ENCODE measurements at regions of chr18 and their contacts with region 1.

Region 1: GRCh38 chr18:59056706-59057492 is 82.8 kb upstream of the SEC11C start:
- DNase-seq: peak; percentile 88 to 91
- ATAC-seq: peak; percentile 73
- H3K4me3 ChIP-seq: no peak overlapping the region
- H3K27ac ChIP-seq: no peak overlapping the region
- H3K4me1 ChIP-seq: peaks cover 1 to 8% of the 10 kb centered on the region in 2 donors
- H3K27me3 ChIP-seq: no peaks in the 10 kb centered on the region

Region 2: DNA sequence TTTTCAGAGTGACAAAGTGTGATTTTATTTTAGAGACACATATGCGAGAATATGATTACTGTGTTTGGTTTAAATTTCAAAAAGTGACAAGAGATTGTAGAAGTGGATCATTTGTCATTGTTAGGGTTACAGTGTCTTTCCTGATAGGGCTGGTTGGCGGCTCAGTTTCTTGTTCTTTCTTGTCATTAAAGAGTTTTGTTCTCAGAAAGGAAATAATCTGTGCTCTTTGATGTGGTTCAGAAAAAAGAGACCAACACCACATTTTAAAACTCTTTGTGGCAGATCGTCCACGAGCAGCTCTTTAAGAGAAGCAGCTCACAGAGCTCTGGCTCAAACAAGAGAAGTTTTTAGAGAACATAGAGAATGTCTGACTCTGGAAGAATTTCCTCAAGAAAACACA is 237.8 kb before region 1 on chr18:
- intact Hi-C with region 1: no loop called
- DNase-seq: no peak
- ATAC-seq: no peak
- H3K4me3 ChIP-seq: no peak overlapping the region
- H3K27ac ChIP-seq: no peak overlapping the region
- H3K4me1 ChIP-seq: peaks cover 0 to 4% of the 10 kb centered on the region in 2 donors
- H3K27me3 ChIP-seq: no peaks in the 10 kb centered on the region

Region 3: GRCh38 chr18:58864146-58865032 is 192.5 kb before region 1 on chr18 and contains the start of gene ZNF532:
- intact Hi-C with region 1: loop called in 1 of 2 experiments (anchors 5 kb)
- DNase-seq: peak in 1 of 2 donors; percentile 62
- ATAC-seq: peak; percentile 65
- H3K4me3 ChIP-seq: peak within 1 kb of the TSS; percentile 29 to 74
- H3K27ac ChIP-seq: peak within 1 kb of the TSS; percentile 99 to 100
- H3K4me1 ChIP-seq: peaks cover 2 to 15% of the 10 kb centered on the region in 2 donors
- H3K27me3 ChIP-seq: no peaks in the 10 kb centered on the region
- total RNA-seq, gene ZNF532: 183 to 194 TPM

Region 4: GRCh38 chr18:58887613-58887963 is 169.3 kb before region 1 on chr18:
- intact Hi-C with region 1: loop called in 1 of 2 experiments (anchors 10 kb)
- DNase-seq: peak; percentile 83 to 90
- ATAC-seq: peak; percentile 88
- H3K4me3 ChIP-seq: no peak overlapping the region
- H3K27ac ChIP-seq: peak overlapping the region; percentile 66 to 68
- H3K4me1 ChIP-seq: peaks cover under 1 to 9% of the 10 kb centered on the region in 2 donors
- H3K27me3 ChIP-seq: no peaks in the 10 kb centered on the region

Region 5: GRCh38 chr18:58998401-58999203 is 58.3 kb before region 1 on chr18:
- intact Hi-C with region 1: loop called in 1 of 2 experiments (anchors 2 kb)
- DNase-seq: peak; percentile 80 to 85
- ATAC-seq: peak; percentile 70
- H3K4me3 ChIP-seq: peak overlapping the region in 1 of 2 donors; percentile 23
- H3K27ac ChIP-seq: peak overlapping the region; percentile 85 to 88
- H3K4me1 ChIP-seq: peaks cover 2 to 7% of the 10 kb centered on the region in 2 donors
- H3K27me3 ChIP-seq: no peaks in the 10 kb centered on the region

Region 6: DNA sequence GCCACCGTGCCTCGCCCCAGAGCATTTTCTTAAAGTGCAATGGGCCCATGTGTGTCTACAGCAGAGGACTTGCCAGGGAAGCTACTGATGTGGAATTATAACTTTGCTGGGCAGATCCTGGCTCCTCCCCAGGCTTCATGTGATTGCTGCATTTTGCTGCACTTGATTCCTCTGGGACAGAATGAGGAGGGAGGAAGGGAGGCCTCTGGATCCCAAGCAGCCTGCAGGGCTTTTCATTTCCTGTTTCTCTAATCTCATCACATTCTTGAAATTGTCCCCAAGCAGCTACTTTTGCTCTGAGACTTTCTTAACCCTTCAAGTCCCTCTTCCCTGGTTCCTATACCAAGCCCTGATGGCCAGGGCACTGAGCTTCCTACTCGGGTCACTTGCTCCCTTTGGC is 51.6 kb before region 1 on chr18:
- intact Hi-C with region 1: loop called in 1 of 2 experiments (anchors 2 kb)
- DNase-seq: peak in 1 of 2 donors; percentile 84
- ATAC-seq: peak; percentile 71
- H3K4me3 ChIP-seq: no peak overlapping the region
- H3K27ac ChIP-seq: peak overlapping the region; percentile 38 to 78
- H3K4me1 ChIP-seq: no peaks in the 10 kb centered on the region
- H3K27me3 ChIP-seq: no peaks in the 10 kb centered on the region

Measured in aorta (tissue), 5 donors.